PC-3 (cell line): ENCODE measurements at regions of chr20 and their contacts with region 1.

Region 1: DNA sequence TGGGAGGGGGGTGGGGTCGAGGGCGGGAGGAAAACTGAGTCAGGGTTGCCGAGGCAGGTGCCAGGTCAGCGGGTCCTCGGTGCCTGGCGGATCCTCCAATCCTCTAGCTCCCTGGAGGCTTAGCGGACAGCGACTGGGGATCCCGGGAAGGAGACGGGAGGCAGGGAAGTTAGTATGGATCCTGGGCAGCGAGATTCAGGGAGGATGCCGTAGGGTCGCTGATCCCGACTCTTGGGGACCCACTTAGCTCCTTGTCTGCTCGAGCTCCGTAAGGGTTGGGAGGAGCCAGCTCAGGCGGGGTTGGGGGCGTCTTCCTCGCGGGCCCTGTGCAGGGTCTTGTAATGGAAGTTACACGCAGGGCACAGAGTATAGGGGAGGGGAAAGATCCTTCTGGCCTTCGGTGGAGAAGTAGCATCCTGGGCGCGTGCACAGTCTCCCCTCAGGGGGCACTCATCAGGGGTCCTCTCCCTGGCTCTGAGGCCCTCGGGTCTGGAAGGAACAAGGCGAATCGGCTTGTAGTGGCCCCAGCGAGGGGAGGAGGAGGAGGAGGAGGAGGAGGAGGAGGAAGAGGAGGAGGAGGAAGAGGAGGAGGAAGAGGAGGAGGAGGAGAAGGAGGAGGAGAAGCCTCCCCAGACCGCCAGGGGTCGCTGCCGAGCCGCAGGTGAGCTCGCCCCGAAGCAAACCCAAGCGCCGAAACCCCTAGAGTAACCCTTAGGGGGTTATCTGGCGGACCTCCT is 6.4 kb upstream of the SLC12A5 start:
- DNase-seq: peak; percentile 68
- ATAC-seq: peak; percentile 41
- H3K4me3 ChIP-seq: peak overlapping the region; percentile 71
- H3K27ac ChIP-seq: no peak overlapping the region
- H3K4me1 ChIP-seq: peaks cover 8% of the 10 kb centered on the region; the same call in 1 of the 2 replicates
- H3K27me3 ChIP-seq: no peaks in the 10 kb centered on the region
- CTCF ChIP-seq: peak; percentile 70

Region 2: DNA sequence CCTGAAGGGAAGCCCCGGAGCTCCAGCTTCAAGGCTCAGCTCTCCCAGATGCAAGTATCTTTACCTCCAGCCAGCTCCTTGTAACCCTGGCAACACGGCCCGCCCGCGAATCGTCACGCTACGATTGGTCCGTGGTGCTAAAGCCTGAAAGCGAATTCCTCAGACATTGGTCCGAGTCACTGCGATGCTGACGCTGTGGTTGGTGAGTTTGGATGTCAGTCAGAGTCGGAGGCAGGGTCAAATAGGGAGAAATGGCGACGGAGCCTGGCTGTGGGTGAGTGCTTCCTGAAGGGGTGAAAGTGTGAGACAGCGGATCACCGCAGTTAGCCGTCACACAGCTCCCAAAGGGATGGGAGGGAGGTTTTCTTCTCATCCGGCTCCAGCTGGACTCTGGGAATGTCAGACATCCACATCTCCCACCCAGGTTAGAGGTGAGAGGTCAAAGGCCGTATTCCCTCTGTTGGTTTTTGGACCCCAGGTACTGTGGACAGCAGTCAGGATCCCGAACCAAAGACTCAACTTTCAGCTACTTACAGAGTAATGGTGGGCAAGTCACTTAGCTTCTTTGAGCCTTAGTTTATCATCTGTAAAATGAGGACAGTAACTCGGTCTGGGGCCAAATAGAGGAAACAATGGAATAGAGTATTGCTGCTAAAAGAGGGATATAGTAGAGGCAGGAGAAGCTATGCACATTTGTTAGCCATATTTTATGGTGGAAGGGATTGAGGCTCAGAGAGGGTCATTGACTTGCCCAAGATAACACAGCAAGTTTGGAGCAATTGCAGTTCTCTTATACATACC is 141.4 kb before region 1 on chr20 and contains the start of gene ZSWIM1:
- CTCF ChIA-PET with region 1: no interaction called
- POLR2A ChIA-PET with region 1: no interaction called
- intact Hi-C with region 1: no loop called
- DNase-seq: peak; percentile 100
- ATAC-seq: peak; percentile 97
- H3K4me3 ChIP-seq: peak within 1 kb of the TSS; percentile 96
- H3K27ac ChIP-seq: peak within 1 kb of the TSS; percentile 36
- H3K4me1 ChIP-seq: peaks cover 22% of the 10 kb centered on the region
- H3K27me3 ChIP-seq: no peaks in the 10 kb centered on the region
- CTCF ChIP-seq: no peak
- total RNA-seq, gene ZSWIM1: 9.4 and 16.3 TPM in 2 replicates

Region 3: GRCh38 chr20:46004889-46005473 is 17.6 kb before region 1 on chr20:
- CTCF ChIA-PET with region 1: no interaction called
- POLR2A ChIA-PET with region 1: no interaction called
- intact Hi-C with region 1: no loop called
- DNase-seq: peak; percentile 77
- ATAC-seq: peak; percentile 63
- H3K4me3 ChIP-seq: no peak overlapping the region
- H3K27ac ChIP-seq: no peak overlapping the region
- H3K4me1 ChIP-seq: peaks cover 16% of the 10 kb centered on the region
- H3K27me3 ChIP-seq: no peaks in the 10 kb centered on the region
- CTCF ChIP-seq: no peak

Region 4: DNA sequence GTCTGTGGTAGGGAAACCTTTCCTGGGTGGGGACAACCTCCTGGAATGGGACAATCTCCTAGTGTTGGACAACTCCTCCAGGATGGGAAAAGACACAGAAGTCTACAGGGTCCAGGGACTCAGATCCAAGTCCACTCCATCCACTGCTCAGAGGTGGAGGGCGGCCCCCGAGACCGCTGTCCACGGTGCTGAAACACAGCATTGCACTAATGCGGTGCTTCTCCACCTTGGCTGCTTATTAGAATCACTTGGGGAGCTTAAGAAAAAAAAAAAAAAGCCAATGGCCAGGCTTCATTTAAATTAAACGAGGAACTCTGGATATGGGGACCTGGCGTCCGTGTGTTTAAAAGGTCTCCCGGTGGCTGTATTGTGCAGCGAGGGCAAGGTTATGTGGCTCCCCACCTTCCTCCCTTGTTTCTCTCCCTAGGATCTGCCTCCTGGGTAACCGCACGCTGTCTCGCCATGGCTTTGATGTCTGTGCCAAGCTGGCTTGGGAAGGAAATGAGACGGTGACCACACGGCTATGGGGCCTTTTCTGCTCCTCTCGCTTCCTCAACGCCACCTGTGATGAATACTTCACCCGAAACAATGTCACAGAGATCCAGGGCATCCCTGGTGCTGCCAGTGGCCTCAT is 18.4 kb after region 1 on chr20:
- CTCF ChIA-PET with region 1: interaction called, 5 read pairs
- POLR2A ChIA-PET with region 1: no interaction called
- intact Hi-C with region 1: loop called (anchors 1 kb)
- DNase-seq: peak; percentile 67
- ATAC-seq: peak; percentile 67
- H3K4me3 ChIP-seq: no peak overlapping the region
- H3K27ac ChIP-seq: no peak overlapping the region
- H3K4me1 ChIP-seq: no peaks in the 10 kb centered on the region
- H3K27me3 ChIP-seq: peaks cover 37% of the 10 kb centered on the region
- CTCF ChIP-seq: no peak

Region 5: GRCh38 chr20:46087161-46087560 is 64.6 kb after region 1 on chr20:
- CTCF ChIA-PET with region 1: interaction called, 3 read pairs
- POLR2A ChIA-PET with region 1: interaction called, 4 read pairs
- intact Hi-C with region 1: loop called (anchors 1 kb)
- DNase-seq: peak; percentile 41
- ATAC-seq: no peak
- H3K4me3 ChIP-seq: peak overlapping the region; percentile 44; the same call in 1 of the 2 replicates
- H3K27ac ChIP-seq: no peak overlapping the region
- H3K4me1 ChIP-seq: peaks cover 38% of the 10 kb centered on the region
- H3K27me3 ChIP-seq: no peaks in the 10 kb centered on the region
- CTCF ChIP-seq: peak; percentile 67

Region 6: GRCh38 chr20:46157625-46158024 is 135.0 kb after region 1 on chr20:
- CTCF ChIA-PET with region 1: no interaction called
- POLR2A ChIA-PET with region 1: no interaction called
- intact Hi-C with region 1: no loop called
- DNase-seq: no peak
- ATAC-seq: no peak
- H3K4me3 ChIP-seq: no peak overlapping the region
- H3K27ac ChIP-seq: no peak overlapping the region
- H3K4me1 ChIP-seq: no peaks in the 10 kb centered on the region
- H3K27me3 ChIP-seq: peaks cover 73% of the 10 kb centered on the region
- CTCF ChIP-seq: no peak

Region 7: DNA sequence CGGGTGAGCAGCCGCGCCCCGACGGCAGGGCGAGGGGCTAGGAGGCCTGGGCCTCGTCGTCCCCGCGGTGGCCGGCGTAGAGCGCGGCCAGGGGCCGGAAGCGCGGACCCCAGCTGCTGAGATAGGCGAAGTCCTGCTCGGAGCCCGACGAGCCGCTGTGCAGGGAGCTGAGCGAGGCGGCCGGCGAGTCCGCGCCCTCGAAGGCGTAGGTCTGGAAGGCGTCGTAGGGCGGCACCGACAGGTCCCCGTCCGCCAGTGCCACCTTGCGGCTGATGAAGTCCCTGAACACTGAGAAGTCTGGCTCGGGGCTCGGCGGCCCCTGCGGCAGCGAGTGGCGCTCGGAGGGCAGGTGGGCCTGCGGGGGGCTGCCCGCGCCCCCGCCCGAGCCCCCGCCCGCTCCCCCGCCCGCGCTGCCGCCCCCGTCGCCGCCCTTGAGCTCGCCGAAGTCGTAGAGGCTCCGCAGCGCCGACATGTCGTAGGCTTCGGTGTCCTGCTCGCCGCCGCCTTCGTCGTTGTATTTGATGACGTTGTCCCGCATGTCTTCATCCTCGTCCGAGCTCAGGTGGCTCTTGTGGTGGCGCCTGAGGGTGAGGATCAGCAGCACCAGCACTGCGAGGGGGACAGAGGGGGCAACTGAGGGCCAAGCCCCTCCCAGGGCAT is 152.0 kb after region 1 on chr20:
- CTCF ChIA-PET with region 1: interaction called, 13 read pairs
- POLR2A ChIA-PET with region 1: no interaction called
- intact Hi-C with region 1: loop called (anchors 10 kb)
- DNase-seq: peak; percentile 54
- ATAC-seq: peak; percentile 79
- H3K4me3 ChIP-seq: no peak overlapping the region
- H3K27ac ChIP-seq: no peak overlapping the region
- H3K4me1 ChIP-seq: no peaks in the 10 kb centered on the region
- H3K27me3 ChIP-seq: peaks cover 82% of the 10 kb centered on the region
- CTCF ChIP-seq: peak; percentile 43

Region 8: DNA sequence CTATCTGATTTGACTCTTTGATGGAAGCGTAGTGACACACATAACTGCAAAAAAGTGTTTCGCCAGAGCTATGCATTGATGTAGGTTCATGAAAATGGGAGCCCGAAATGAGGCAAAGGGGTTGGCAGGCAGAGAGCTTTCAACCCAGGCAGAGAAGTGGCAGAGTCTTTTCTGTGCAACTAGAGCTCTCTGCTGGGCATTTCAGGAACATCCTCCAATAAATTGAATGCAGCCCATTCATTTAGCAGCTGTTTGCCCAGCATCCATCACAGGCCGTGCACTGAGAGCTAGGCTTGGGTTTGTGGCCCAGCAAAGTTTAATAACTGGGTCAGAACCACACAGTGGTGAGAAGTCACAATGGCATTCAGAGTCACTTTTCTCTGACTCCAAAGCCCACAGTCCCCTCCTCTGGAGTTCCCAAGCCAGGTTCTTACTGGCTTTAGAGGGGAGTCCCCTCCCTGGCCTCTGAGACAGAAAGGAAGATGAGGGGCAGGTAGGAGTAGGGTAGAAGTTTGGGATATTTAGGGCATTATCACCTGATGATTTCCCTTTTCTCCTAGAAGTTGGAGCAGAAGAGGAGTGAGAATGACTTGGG is 415.7 kb after region 1 on chr20:
- CTCF ChIA-PET with region 1: interaction called, 9 read pairs
- POLR2A ChIA-PET with region 1: no interaction called
- intact Hi-C with region 1: loop called (anchors 10 kb)
- DNase-seq: peak; percentile 73
- ATAC-seq: peak; percentile 92
- H3K4me3 ChIP-seq: no peak overlapping the region
- H3K27ac ChIP-seq: no peak overlapping the region
- H3K4me1 ChIP-seq: peaks cover 6% of the 10 kb centered on the region; the same call in 1 of the 2 replicates
- H3K27me3 ChIP-seq: peaks cover 48% of the 10 kb centered on the region
- CTCF ChIP-seq: peak; percentile 80

Region 9: GRCh38 chr20:47631078-47631477 is 1608.5 kb after region 1 on chr20:
- CTCF ChIA-PET with region 1: interaction called, 15 read pairs
- POLR2A ChIA-PET with region 1: no interaction called
- intact Hi-C with region 1: no loop called
- DNase-seq: no peak
- ATAC-seq: no peak
- H3K4me3 ChIP-seq: no peak overlapping the region
- H3K27ac ChIP-seq: no peak overlapping the region
- H3K4me1 ChIP-seq: no peaks in the 10 kb centered on the region
- H3K27me3 ChIP-seq: no peaks in the 10 kb centered on the region
- CTCF ChIP-seq: no peak